ENCODE measurements at regions of chr3 and their contacts with region 1.

Region 1: GRCh38 chr3:55296030-55296429 is 191.1 kb downstream of the WNT5A start:
- DNase-seq: no peak
- H3K4me3 ChIP-seq: no peak overlapping the region
- H3K27ac ChIP-seq: no peak overlapping the region
- H3K4me1 ChIP-seq: no peaks in the 10 kb centered on the region
- H3K27me3 ChIP-seq: no peaks in the 10 kb centered on the region
- CTCF ChIP-seq: no peak
- EP300 ChIP-seq: no peak
- POLR2A ChIP-seq: no peak

Region 2: DNA sequence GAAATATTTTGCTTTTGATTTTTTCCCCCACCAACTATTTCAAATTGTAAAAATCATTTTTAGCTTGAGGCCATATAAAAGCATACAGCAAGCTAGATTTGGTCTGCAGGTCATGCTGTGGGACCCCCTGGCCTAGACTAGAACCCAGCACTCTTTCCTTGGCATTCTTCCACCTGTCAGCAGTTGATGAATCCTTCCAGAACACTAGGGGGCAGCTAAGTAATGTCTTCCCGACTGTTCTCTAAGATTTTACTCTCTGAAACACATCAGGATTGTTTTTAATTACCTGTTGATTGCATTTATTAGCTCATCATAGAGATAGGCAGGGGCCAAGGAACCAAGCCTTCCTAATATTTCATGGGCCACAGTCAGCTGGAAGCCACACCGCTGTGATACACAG is 1627.2 kb before region 1 on chr3:
- intact Hi-C with region 1: loop called in 1 of 4 experiments (anchors 5 kb)
- DNase-seq: no peak
- H3K4me3 ChIP-seq: no peak overlapping the region
- H3K27ac ChIP-seq: no peak overlapping the region
- H3K4me1 ChIP-seq: no peaks in the 10 kb centered on the region
- H3K27me3 ChIP-seq: no peaks in the 10 kb centered on the region
- CTCF ChIP-seq: no peak
- EP300 ChIP-seq: no peak
- POLR2A ChIP-seq: no peak

Measured in ovary (tissue), 10 donors.